Panc1 (cell line): ENCODE measurements at regions of chr1 and their contacts with region 1.

Region 1: GRCh38 chr1:211654838-211655787 is 20.3 kb downstream of the NEK2 start:
- DNase-seq: no peak
- ATAC-seq: peak; percentile 94
- H3K4me3 ChIP-seq: no peak overlapping the region
- H3K27ac ChIP-seq: peak overlapping the region; percentile 36
- H3K4me1 ChIP-seq: peaks cover 15% of the 10 kb centered on the region
- H3K27me3 ChIP-seq: no peaks in the 10 kb centered on the region
- CTCF ChIP-seq: peak; percentile 95

Region 2: GRCh38 chr1:211258756-211259637 is 396.1 kb before region 1 on chr1 and contains the start of gene RCOR3:
- CTCF ChIA-PET with region 1: no interaction called
- POLR2A ChIA-PET with region 1: no interaction called
- in situ Hi-C with region 1: no loop called
- intact Hi-C with region 1: no loop called
- DNase-seq: peak; percentile 62
- ATAC-seq: peak; percentile 91
- H3K4me3 ChIP-seq: peak within 1 kb of the TSS; percentile 87 to 95
- H3K27ac ChIP-seq: peak within 1 kb of the TSS; percentile 97
- H3K4me1 ChIP-seq: peaks cover 11% of the 10 kb centered on the region
- H3K27me3 ChIP-seq: no peaks in the 10 kb centered on the region
- CTCF ChIP-seq: peak; percentile 85
- total RNA-seq, gene RCOR3: 40.4 TPM

Region 3: DNA sequence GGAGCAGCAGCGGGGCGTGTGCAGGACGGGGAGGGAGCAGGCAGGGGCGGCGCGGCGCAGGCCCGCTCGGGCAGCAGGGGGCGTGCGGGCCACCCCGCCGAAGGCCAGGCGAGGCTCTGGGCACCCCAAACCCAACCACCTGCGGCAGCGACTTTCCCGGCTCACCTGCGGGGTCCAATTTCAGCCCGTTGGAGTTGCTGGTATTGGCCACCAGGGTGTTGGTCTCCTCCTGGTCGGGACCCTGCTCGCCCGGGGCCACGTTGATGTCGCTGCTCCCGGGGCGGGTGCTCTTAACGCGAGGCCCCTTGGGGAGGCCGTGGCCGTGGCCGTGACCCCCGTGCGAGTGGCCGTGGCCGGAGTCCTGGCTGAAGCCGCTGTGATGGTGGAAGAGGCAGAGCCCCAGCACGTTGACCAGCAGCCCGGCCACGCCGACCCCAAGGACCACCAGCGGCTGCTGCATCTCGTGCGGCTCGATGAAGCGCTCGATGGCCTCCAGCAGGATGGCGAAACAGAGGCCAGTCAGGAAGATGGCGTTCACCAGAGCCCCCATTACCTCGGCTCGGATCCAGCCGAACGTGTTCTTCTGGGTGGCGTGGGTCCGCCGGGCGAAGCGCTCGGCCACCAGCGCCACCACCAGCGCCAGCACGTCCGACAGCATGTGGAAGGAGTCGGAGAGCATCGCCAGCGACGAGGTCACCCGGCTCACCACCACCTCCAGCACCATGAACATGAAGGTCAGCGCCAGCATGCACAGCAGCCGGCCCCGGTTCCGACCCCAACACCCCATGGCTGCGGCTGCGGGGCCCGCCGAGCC is 77.1 kb before region 1 on chr1:
- CTCF ChIA-PET with region 1: no interaction called
- POLR2A ChIA-PET with region 1: no interaction called
- in situ Hi-C with region 1: no loop called
- intact Hi-C with region 1: loop called (anchors 1 kb)
- DNase-seq: peak; percentile 42
- ATAC-seq: peak; percentile 78
- H3K4me3 ChIP-seq: peak overlapping the region; percentile 70 to 94
- H3K27ac ChIP-seq: peak overlapping the region; percentile 83
- H3K4me1 ChIP-seq: peaks cover 32% of the 10 kb centered on the region
- H3K27me3 ChIP-seq: no peaks in the 10 kb centered on the region
- CTCF ChIP-seq: peak; percentile 94